Mucosa of descending colon (tissue), 3 donors: ENCODE measurements at regions of chr4 and their contacts with region 1.

Region 1: DNA sequence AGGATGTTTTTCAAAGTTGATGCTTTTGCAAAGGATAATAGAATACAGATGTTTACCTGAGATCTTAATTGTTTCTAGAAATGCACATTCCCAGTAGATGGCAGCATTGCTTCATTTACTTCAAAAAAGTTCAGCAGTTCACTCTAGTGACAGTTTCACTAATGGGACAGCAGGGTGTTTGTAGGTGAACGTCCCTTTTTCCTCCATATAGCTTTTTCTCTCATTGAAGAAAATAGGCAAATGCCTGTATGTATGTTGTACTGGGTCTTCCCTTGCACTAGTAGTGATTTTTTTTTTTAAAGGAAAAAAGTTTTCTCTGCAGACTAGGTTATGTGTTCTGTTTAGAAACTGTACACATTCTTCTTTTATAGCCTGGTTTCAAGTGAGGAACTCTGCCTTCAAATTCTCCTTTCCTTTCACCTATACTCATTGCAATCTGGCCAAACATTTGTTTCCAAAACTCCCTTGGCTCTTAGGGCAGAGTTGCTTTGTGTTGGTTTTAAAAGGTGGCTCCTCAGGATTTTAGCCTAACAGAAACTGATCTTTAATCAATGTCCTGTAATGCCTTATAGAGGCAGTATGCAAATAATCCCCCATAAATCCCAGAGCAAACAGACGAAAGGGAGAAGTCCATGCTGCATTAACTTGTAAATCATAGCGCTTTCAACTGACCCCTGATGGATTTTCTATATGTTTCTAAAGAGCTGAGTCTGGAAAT is 86.3 kb downstream of the EGF start:
- DNase-seq: peak in 1 of 3 donors; percentile 69
- ATAC-seq: peak; percentile 83
- H3K4me3 ChIP-seq: no peak overlapping the region
- H3K4me1 ChIP-seq: no peaks in the 10 kb centered on the region
- CTCF ChIP-seq: peak; percentile 35

Region 2: DNA sequence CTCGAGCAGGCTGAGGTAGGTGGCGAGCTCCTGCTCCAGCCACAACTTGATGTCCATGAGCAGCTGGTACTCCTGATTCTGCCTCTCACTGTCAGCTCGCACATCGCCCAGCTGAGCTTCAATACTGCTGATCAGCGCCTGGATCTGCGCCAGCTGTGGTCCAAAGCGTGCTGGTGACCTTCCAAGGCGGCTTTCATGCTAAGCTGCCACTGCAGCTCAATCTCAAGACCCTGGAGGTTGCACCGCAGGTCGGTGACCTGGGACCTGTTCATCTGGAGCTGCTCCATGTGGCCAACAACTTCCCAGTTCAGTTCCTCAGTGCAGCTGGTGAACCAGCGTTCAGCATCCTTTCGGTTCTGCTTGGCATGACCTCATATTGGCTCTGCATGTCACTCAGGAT is 119.9 kb before region 1 on chr4:
- intact Hi-C with region 1: no loop called
- DNase-seq: no peak
- ATAC-seq: no peak
- H3K4me3 ChIP-seq: no peak overlapping the region
- H3K4me1 ChIP-seq: no peaks in the 10 kb centered on the region
- CTCF ChIP-seq: no peak

Region 3: DNA sequence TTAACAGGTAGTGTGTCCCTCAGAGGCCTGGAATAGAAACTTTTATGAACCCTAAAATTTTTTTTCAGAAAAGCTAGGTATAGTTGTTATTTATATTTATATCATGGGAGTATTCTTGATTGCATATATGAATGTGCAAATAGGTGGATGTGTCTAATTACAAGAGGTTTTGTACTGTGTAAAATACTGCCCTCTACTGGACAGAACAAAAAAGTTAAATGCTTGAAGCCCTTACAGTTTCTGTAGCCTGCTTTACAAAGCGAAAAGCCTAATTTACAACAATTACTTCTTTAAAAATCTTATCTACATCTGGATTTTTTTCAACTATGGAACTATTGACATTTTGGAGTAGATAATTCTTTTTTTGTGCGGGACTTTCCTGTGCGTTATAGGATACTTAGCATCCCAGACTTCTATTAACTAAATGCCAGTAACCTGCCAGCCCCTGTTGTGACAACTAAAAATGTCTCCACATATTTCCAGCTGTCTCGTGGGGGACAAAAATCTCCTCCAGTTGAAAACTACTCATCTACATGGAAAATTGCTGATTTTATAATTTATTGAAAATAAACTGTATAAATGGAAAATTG is 512.0 kb after region 1 on chr4:
- intact Hi-C with region 1: loop called (anchors 2 to 5 kb)
- DNase-seq: no peak
- ATAC-seq: peak; percentile 75
- H3K4me3 ChIP-seq: no peak overlapping the region
- H3K4me1 ChIP-seq: peaks cover 2% of the 10 kb centered on the region
- CTCF ChIP-seq: peak; percentile 45

Region 4: GRCh38 chr4:110516106-110516922 is 517.3 kb after region 1 on chr4:
- intact Hi-C with region 1: loop called (anchors 2 to 5 kb)
- DNase-seq: peak; percentile 58 to 90 (median 77)
- ATAC-seq: peak; percentile 100
- H3K4me3 ChIP-seq: no peak overlapping the region
- H3K4me1 ChIP-seq: peaks cover 2% of the 10 kb centered on the region
- CTCF ChIP-seq: peak; percentile 22

Region 5: DNA sequence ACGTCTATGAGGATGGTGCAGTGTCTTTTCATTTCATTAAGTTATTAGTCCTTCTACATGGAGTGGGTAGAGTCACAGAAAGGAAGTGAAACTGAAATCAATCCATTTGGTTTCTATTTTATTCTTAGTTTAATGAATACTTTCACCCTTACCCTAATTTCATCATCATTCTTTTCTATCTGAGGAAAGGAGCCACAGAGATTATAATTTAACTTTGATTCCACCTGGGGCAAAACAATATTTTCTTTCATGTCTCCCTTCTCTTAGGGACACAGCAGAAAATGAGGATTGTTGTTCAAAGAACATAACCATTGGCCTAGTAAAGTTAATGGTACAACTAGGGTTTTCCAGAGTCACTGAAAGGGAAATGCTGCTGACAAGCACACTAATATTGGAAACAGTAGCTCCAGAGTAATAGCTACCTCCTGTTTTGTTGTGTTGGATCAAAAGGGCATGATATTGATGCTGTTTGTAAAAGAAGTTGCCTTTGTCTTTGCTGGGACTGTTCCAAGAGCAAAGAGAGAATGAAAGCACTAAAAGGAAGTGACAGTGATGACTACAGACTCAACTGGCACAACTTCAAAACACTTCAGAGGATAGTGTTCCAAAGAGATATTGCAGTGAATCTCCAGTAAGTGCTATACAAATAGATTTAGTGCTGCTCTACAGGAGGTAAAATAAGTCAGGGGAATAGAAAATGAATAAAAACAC is 871.0 kb after region 1 on chr4:
- intact Hi-C with region 1: no loop called
- DNase-seq: no peak
- ATAC-seq: peak; percentile 50
- H3K4me3 ChIP-seq: no peak overlapping the region
- H3K4me1 ChIP-seq: no peaks in the 10 kb centered on the region
- CTCF ChIP-seq: no peak